K562 (cell line): ENCODE measurements at regions of chr17 and their contacts with region 1.

Region 1: GRCh38 chr17:38853292-38854219 is at the start of gene RPL23:
- DNase-seq: peak; percentile 85 to 99 (median 90)
- ATAC-seq: peak; percentile 87
- H3K4me3 ChIP-seq: peak within 1 kb of the TSS; percentile 82
- H3K27ac ChIP-seq: peak within 1 kb of the TSS; percentile 93
- H3K4me1 ChIP-seq: peaks cover 5 to 18% of the 10 kb centered on the region in 2 experiments
- H3K27me3 ChIP-seq: no peaks in the 10 kb centered on the region
- CTCF ChIP-seq: no peak
- EP300 ChIP-seq: peak; percentile 70; the same call in 1 of the 2 replicates
- POLR2A ChIP-seq: peak; percentile 99
- RAD21 ChIP-seq: no peak
- polyA plus RNA-seq, gene RPL23: 2,598 to 3,667 TPM

Region 2: DNA sequence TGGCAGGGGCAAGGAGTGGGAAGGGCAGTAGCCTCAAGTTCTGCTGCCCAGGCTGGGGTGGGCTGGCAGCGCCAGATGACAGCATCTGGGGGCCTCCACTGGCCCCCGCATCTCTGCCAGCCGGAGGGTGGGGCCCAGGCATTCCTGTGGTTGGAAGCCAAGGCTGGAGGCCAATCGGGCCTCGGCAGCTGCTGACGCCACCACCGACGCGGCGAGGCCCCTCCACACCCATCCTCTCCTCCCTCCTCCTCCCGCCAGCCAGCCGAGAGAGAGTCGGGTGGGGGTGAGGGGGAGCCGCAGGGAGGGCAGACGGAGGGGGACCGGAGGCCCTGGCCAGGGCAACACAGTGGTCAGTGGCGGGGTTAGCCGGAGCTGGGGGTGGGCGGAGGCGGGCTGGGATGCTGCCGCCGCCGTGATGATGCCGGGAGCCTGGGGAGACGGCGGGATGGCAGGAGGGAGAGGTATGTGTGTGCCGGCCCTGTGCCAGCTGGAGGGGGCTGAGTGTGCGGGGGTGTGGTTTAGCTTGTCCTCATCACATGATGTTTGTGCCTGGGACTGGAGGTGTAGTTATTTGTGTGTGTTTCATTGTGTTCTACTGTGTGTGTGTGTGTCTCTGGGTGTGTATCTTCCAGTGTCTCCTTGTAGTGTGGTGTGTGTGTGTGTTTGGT is 388.7 kb before region 1 on chr17:
- CTCF ChIA-PET with region 1: no interaction called
- POLR2A ChIA-PET with region 1: no interaction called
- in situ Hi-C with region 1: no loop called
- intact Hi-C with region 1: no loop called
- DNase-seq: peak; percentile 73 to 90 (median 84)
- ATAC-seq: peak; percentile 89
- H3K4me3 ChIP-seq: peak overlapping the region; percentile 12; the same call in 1 of the 2 replicates
- H3K27ac ChIP-seq: no peak overlapping the region
- H3K4me1 ChIP-seq: peaks cover 20 to 64% of the 10 kb centered on the region in 2 experiments; a peak in 4 of 5 replicates
- H3K27me3 ChIP-seq: peaks cover 0 to 28% of the 10 kb centered on the region in 2 experiments; a peak in 2 of 5 replicates
- CTCF ChIP-seq: no peak
- EP300 ChIP-seq: no peak
- POLR2A ChIP-seq: no peak
- RAD21 ChIP-seq: no peak

Region 3: GRCh38 chr17:38752119-38752929 is 101.2 kb before region 1 on chr17 and contains the start of gene PSMB3:
- CTCF ChIA-PET with region 1: no interaction called
- POLR2A ChIA-PET with region 1: interaction called, 5 read pairs
- in situ Hi-C with region 1: no loop called
- intact Hi-C with region 1: loop called (anchors 5 kb)
- DNase-seq: peak; percentile 95 to 99 (median 97)
- ATAC-seq: peak; percentile 84
- H3K4me3 ChIP-seq: peak within 1 kb of the TSS; percentile 74
- H3K27ac ChIP-seq: peak within 1 kb of the TSS; percentile 87
- H3K4me1 ChIP-seq: peaks cover 7 to 42% of the 10 kb centered on the region in 2 experiments
- H3K27me3 ChIP-seq: no peaks in the 10 kb centered on the region
- CTCF ChIP-seq: no peak
- EP300 ChIP-seq: peak; percentile 25; the same call in 1 of the 2 replicates
- POLR2A ChIP-seq: peak; percentile 90
- RAD21 ChIP-seq: no peak
- polyA plus RNA-seq, gene PSMB3: 2,413 to 2,775 TPM

Region 4: DNA sequence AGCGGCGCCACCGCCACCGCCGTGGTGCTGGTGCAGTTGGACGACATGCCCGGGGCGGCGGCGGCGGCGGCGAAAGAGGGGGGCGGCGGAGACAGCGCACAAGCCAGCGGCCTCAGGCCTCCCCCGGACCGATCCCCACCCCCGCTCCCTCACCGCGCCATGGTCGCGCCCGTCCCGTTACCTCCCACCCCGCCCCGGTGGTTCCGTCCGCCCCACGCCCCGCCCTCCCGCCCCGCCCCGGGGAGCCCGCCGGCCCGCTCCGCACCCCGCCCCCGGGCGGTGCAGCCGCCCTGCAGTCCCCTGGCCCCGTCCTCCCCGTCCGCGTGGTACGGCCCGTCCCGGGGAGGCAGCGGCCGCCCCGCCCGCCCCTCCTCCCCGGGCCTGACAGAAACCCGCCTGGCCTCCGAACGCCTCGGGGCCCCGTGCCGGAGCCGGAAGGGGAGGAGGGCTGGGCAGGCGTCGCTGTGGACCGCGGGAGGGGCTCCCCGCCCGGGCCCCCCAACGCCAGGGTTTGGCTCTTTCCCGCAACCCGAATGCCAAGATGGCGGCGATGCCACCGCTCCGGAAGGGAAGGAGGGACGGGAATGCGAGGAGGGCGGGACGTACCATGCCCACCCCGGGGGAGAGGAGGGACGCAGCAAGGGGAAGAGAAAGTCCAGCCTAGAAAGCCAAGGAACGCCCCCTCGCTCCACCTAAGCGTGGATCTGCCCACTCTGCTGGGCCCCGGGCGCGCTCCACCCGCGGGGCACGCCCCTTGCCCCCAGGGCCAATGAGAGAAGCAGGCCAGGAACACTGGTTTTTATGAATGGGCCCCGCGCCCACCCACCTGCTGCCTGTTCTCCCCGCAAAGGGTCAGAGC is 53.9 kb before region 1 on chr17 and contains the start of gene PIP4K2B:
- CTCF ChIA-PET with region 1: no interaction called
- POLR2A ChIA-PET with region 1: interaction called, 10 read pairs
- in situ Hi-C with region 1: no loop called
- intact Hi-C with region 1: no loop called
- DNase-seq: peak; percentile 97 to 98 (median 97)
- ATAC-seq: peak; percentile 93
- H3K4me3 ChIP-seq: peak within 1 kb of the TSS; percentile 87
- H3K27ac ChIP-seq: peak within 1 kb of the TSS; percentile 98
- H3K4me1 ChIP-seq: peaks cover 20% of the 10 kb centered on the region in 2 experiments
- H3K27me3 ChIP-seq: no peaks in the 10 kb centered on the region
- CTCF ChIP-seq: no peak
- EP300 ChIP-seq: no peak
- POLR2A ChIP-seq: peak; percentile 88
- RAD21 ChIP-seq: no peak
- polyA plus RNA-seq, gene PIP4K2B: 3.7 to 5.7 TPM

Region 5: DNA sequence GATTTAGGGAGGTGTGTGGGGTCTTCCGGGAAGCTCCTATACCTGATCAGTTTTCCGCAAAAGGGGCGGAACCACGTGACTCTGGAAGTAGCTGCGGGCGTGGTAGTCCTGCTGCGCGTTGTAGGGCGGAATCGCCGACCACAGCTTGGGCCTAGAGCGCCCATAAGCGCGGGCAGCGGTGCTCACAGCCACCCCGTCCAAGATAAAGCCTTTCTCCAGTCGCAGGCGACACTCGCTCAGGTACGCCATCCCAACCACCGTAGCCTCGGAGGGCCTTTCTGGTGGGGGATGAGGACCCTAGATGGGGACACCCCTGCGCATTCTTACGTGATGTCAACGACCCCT is 12.4 kb before region 1 on chr17:
- CTCF ChIA-PET with region 1: no interaction called
- POLR2A ChIA-PET with region 1: interaction called, 50 read pairs
- in situ Hi-C with region 1: no loop called
- intact Hi-C with region 1: no loop called
- DNase-seq: no peak
- ATAC-seq: no peak
- H3K4me3 ChIP-seq: no peak overlapping the region
- H3K27ac ChIP-seq: no peak overlapping the region
- H3K4me1 ChIP-seq: peaks cover 0 to 20% of the 10 kb centered on the region in 2 experiments; a peak in 2 of 5 replicates
- H3K27me3 ChIP-seq: no peaks in the 10 kb centered on the region
- CTCF ChIP-seq: no peak
- EP300 ChIP-seq: no peak
- POLR2A ChIP-seq: no peak
- RAD21 ChIP-seq: no peak